B cell (primary cell): ENCODE measurements at regions of chr17 and their contacts with region 1.

Region 1: GRCh38 chr17:40559954-40560591 is 5.2 kb downstream of the CCR7 start:
- DNase-seq: peak; percentile 88
- ATAC-seq: peak; percentile 46
- H3K4me3 ChIP-seq: peak overlapping the region; percentile 34 to 90 (median 83)
- H3K4me3 Mint-ChIP-seq: peak overlapping the region; percentile 92
- H3K27ac ChIP-seq: peak overlapping the region; percentile 90 to 98
- H3K27ac Mint-ChIP-seq: peak overlapping the region; percentile 94
- H3K4me1 ChIP-seq: peaks cover 79 to 99% of the 10 kb centered on the region in 2 donors
- H3K4me1 Mint-ChIP-seq: peaks cover 79% of the 10 kb centered on the region
- H3K27me3 ChIP-seq: no peaks in the 10 kb centered on the region
- H3K27me3 Mint-ChIP-seq: no peaks in the 10 kb centered on the region
- CTCF ChIP-seq: peak; percentile 97

Region 2: GRCh38 chr17:40333781-40334448 is 226.2 kb before region 1 on chr17:
- CTCF ChIA-PET with region 1: no interaction called
- POLR2A ChIA-PET with region 1: no interaction called
- intact Hi-C with region 1: no loop called
- DNase-seq: no peak
- ATAC-seq: no peak
- H3K4me3 ChIP-seq: no peak overlapping the region
- H3K4me3 Mint-ChIP-seq: peak overlapping the region; percentile 56
- H3K27ac ChIP-seq: peak overlapping the region; percentile 10 to 24
- H3K27ac Mint-ChIP-seq: peak overlapping the region; percentile 78
- H3K4me1 ChIP-seq: peaks cover 62 to 86% of the 10 kb centered on the region in 2 donors
- H3K4me1 Mint-ChIP-seq: peaks cover 63% of the 10 kb centered on the region
- H3K27me3 ChIP-seq: no peaks in the 10 kb centered on the region
- H3K27me3 Mint-ChIP-seq: no peaks in the 10 kb centered on the region
- CTCF ChIP-seq: no peak

Region 3: DNA sequence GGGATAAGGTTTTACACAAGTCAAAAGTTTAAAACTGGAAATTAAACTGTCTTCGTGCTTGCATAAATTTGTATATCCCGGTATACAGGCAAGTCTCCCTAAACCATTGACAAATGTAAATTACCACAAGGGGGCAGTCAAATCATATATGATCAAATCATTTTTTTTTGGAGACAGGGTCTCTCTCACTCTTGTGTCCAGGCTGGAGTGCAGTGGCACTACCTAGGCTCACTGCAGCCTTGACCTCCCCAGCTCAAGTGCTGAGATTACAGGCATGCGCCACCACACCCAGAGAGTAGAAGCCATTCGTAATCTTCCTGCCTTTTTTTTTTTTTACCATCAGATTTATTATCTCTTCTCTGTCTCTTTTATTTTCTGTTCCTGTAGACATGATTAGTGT is 160.9 kb before region 1 on chr17:
- CTCF ChIA-PET with region 1: interaction called, 17 read pairs
- POLR2A ChIA-PET with region 1: no interaction called
- intact Hi-C with region 1: loop called (anchors 1 kb)
- DNase-seq: peak; percentile 74
- ATAC-seq: peak; percentile 54
- H3K4me3 ChIP-seq: no peak overlapping the region
- H3K4me3 Mint-ChIP-seq: no peak overlapping the region
- H3K27ac ChIP-seq: no peak overlapping the region
- H3K27ac Mint-ChIP-seq: no peak overlapping the region
- H3K4me1 ChIP-seq: peaks cover 0 to 8% of the 10 kb centered on the region in 2 donors
- H3K4me1 Mint-ChIP-seq: peaks cover 7% of the 10 kb centered on the region
- H3K27me3 ChIP-seq: no peaks in the 10 kb centered on the region
- H3K27me3 Mint-ChIP-seq: no peaks in the 10 kb centered on the region
- CTCF ChIP-seq: peak; percentile 88

Region 4: DNA sequence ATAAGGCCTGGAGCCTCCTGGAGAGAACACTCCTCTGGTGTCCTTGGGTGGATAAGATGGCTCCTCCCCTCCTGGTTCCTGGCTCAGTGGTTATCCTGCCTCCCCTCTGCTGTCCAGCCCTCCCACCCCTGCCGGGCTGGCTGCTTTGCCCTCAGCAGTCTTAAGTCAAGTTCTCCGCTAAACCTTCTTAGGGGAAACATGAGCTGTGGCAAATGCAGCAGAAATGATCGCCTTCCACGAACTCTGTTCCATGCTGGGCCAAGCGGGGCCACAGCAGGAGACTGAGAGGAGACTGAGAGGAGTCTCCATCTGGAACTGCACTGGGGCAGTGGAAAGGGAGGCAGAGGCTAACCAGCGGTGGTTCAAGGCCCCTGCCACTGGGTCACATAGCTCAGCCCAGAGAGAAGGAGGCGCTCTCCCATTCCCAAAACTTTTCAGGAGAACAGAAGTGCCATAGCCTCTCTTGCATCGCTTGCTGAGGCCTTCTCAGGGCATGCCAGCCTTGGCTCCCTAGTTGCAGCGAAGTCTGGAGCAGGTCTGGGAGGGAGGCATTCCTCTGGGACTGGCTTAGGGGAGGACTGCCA is 85.6 kb before region 1 on chr17:
- CTCF ChIA-PET with region 1: interaction called, 15 read pairs
- POLR2A ChIA-PET with region 1: interaction called, 7 read pairs
- intact Hi-C with region 1: no loop called
- DNase-seq: no peak
- ATAC-seq: no peak
- H3K4me3 ChIP-seq: no peak overlapping the region
- H3K4me3 Mint-ChIP-seq: no peak overlapping the region
- H3K27ac ChIP-seq: no peak overlapping the region
- H3K27ac Mint-ChIP-seq: no peak overlapping the region
- H3K4me1 ChIP-seq: peaks cover 12 to 23% of the 10 kb centered on the region in 2 donors
- H3K4me1 Mint-ChIP-seq: peaks cover 10% of the 10 kb centered on the region
- H3K27me3 ChIP-seq: peaks cover 0 to 4% (median 1%) of the 10 kb centered on the region in 4 experiments
- H3K27me3 Mint-ChIP-seq: no peaks in the 10 kb centered on the region
- CTCF ChIP-seq: no peak

Region 5: GRCh38 chr17:40598663-40599467 is 38.8 kb after region 1 on chr17:
- CTCF ChIA-PET with region 1: interaction called, 53 read pairs
- POLR2A ChIA-PET with region 1: interaction called, 26 read pairs
- intact Hi-C with region 1: loop called (anchors 1 kb)
- DNase-seq: peak; percentile 97
- ATAC-seq: peak; percentile 83
- H3K4me3 ChIP-seq: peak overlapping the region in 3 of 5 experiments; percentile 12 to 37 (median 27)
- H3K4me3 Mint-ChIP-seq: peak overlapping the region; percentile 52
- H3K27ac ChIP-seq: peak overlapping the region; percentile 92 to 96
- H3K27ac Mint-ChIP-seq: peak overlapping the region; percentile 87
- H3K4me1 ChIP-seq: peaks cover 72 to 76% of the 10 kb centered on the region in 2 donors
- H3K4me1 Mint-ChIP-seq: peaks cover 85% of the 10 kb centered on the region
- H3K27me3 ChIP-seq: no peaks in the 10 kb centered on the region
- H3K27me3 Mint-ChIP-seq: no peaks in the 10 kb centered on the region
- CTCF ChIP-seq: no peak

Region 6: DNA sequence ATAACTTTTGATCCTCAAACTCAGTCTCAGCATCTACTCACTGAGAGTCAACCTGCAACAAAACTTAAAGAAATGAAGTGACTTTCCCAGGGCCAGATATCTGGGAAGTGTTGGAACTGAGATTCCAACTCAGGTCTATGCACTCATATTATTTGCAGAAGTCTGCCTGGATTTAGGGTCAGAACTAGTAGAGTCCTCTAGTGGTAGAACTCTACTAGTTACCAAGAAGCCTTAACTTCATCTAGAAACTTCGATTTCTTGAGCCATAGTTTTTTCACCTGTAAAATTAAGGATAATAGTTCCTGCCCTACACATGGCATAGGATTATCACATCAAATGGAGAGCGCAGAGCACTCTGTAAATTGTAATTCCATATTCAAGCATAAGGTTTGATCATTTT is 166.8 kb after region 1 on chr17:
- CTCF ChIA-PET with region 1: no interaction called
- POLR2A ChIA-PET with region 1: no interaction called
- intact Hi-C with region 1: loop called (anchors 10 kb)
- DNase-seq: peak; percentile 12
- ATAC-seq: no peak
- H3K4me3 ChIP-seq: no peak overlapping the region
- H3K4me3 Mint-ChIP-seq: peak overlapping the region; percentile 12
- H3K27ac ChIP-seq: peak overlapping the region; percentile 66 to 73
- H3K27ac Mint-ChIP-seq: peak overlapping the region; percentile 65
- H3K4me1 ChIP-seq: peaks cover 20% of the 10 kb centered on the region in 2 donors
- H3K4me1 Mint-ChIP-seq: peaks cover 22% of the 10 kb centered on the region
- H3K27me3 ChIP-seq: no peaks in the 10 kb centered on the region
- H3K27me3 Mint-ChIP-seq: peaks cover 10% of the 10 kb centered on the region
- CTCF ChIP-seq: no peak